ENCODE measurements at regions of chr13 and their contacts with region 1.

Region 1: DNA sequence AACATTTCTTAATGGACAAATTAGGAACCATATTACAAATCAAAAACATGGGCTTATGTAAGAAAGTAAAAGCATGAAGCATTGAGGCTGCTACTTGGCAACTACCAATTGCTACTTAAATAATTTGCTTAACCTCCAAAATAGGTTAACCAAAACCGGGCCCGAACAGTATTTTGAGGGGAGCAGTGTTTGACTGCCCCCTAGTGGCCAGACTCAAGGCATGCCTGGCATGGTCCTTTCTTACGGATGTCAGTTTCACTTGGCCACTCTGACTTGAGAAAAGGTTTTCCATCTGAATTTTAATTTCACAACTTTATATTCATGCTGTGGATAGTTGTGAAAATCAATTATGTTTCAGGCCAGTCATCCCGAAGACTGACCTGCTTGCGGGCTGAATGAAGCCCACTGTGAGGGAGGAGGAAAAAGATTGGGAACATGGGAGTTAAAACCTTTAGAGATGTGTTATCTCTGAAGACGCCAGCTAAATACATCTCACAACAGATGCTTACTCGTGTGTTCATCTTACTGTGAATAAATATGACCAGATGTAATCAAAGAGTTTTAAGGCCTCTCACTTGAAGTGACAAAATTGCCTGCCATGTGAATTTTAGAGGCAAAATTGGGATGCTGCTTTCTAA is 2.9 kb downstream of the RXFP2 start:
- DNase-seq: peak; percentile 47
- H3K4me3 ChIP-seq: no peak overlapping the region
- H3K27ac ChIP-seq: no peak overlapping the region
- H3K4me1 ChIP-seq: no peaks in the 10 kb centered on the region
- H3K27me3 ChIP-seq: no peaks in the 10 kb centered on the region
- CTCF ChIP-seq: peak; percentile 99

Region 2: DNA sequence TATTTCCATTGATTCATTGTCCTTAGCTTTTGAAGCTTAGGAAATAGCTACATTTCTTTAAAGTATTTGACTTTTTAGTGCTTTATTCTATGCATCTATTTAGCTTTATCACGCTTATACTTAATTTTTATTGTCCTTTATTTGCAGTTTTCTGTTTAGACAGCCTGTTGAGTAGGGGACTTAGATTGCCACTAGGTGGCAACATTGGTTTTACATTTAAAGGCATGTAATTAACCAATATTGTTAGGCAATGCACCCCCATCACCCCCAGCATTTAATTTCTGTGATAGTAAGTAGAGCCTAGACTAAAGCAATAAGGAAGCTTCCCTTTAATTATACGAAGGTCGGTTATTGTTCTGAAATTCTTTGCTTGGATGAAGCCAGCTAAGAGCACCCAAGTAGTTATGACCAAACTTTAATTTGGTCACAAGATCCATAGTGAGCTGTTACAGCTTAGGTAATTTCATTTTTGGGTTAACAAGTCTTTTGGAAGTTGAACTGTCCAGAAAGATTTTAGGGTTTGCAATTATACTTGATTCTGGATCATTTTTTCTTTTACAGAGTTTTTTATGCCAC is 505.9 kb before region 1 on chr13:
- intact Hi-C with region 1: loop called (anchors 5 kb)
- DNase-seq: no peak
- H3K4me3 ChIP-seq: no peak overlapping the region
- H3K27ac ChIP-seq: no peak overlapping the region
- H3K4me1 ChIP-seq: no peaks in the 10 kb centered on the region
- H3K27me3 ChIP-seq: no peaks in the 10 kb centered on the region
- CTCF ChIP-seq: peak; percentile 53

Region 3: GRCh38 chr13:31433746-31434145 is 308.5 kb before region 1 on chr13:
- intact Hi-C with region 1: loop called (anchors 2 kb)
- DNase-seq: no peak
- H3K4me3 ChIP-seq: no peak overlapping the region
- H3K27ac ChIP-seq: no peak overlapping the region
- H3K4me1 ChIP-seq: no peaks in the 10 kb centered on the region
- H3K27me3 ChIP-seq: no peaks in the 10 kb centered on the region
- CTCF ChIP-seq: no peak

Region 4: GRCh38 chr13:31538067-31539042 is 203.9 kb before region 1 on chr13:
- intact Hi-C with region 1: loop called (anchors 5 kb)
- DNase-seq: peak; percentile 25
- H3K4me3 ChIP-seq: no peak overlapping the region
- H3K27ac ChIP-seq: no peak overlapping the region
- H3K4me1 ChIP-seq: no peaks in the 10 kb centered on the region
- H3K27me3 ChIP-seq: no peaks in the 10 kb centered on the region
- CTCF ChIP-seq: peak; percentile 35

Region 5: GRCh38 chr13:31835932-31836331 is 93.7 kb after region 1 on chr13:
- intact Hi-C with region 1: no loop called
- DNase-seq: no peak
- H3K4me3 ChIP-seq: no peak overlapping the region
- H3K27ac ChIP-seq: no peak overlapping the region
- H3K4me1 ChIP-seq: no peaks in the 10 kb centered on the region
- H3K27me3 ChIP-seq: no peaks in the 10 kb centered on the region
- CTCF ChIP-seq: no peak

Region 6: GRCh38 chr13:31846961-31847752 is 104.9 kb after region 1 on chr13:
- intact Hi-C with region 1: no loop called
- DNase-seq: peak; percentile 21
- H3K4me3 ChIP-seq: peak overlapping the region; percentile 52
- H3K27ac ChIP-seq: no peak overlapping the region
- H3K4me1 ChIP-seq: peaks cover 5% of the 10 kb centered on the region
- H3K27me3 ChIP-seq: peaks cover 8% of the 10 kb centered on the region
- CTCF ChIP-seq: no peak